Activated CD8-positive, alpha-beta T cell treated with anti-CD3 and anti-CD28 coated beads for 36 hours (primary cell): ENCODE measurements at regions of chr6 and their contacts with region 1.

Region 1: GRCh38 chr6:53171605-53172446 is 23.2 kb upstream of the GCM1 start:
- DNase-seq: peak; percentile 92
- ATAC-seq: peak; percentile 100
- H3K4me3 Mint-ChIP-seq: no peak overlapping the region
- H3K27ac Mint-ChIP-seq: no peak overlapping the region
- H3K4me1 Mint-ChIP-seq: no peaks in the 10 kb centered on the region
- H3K27me3 Mint-ChIP-seq: no peaks in the 10 kb centered on the region
- CTCF ChIP-seq: peak; percentile 100

Region 2: GRCh38 chr6:53244958-53245357 is 73.1 kb after region 1 on chr6:
- CTCF ChIA-PET with region 1: no interaction called
- POLR2A ChIA-PET with region 1: no interaction called
- intact Hi-C with region 1: no loop called
- DNase-seq: peak; percentile 52
- ATAC-seq: peak; percentile 82
- H3K4me3 Mint-ChIP-seq: no peak overlapping the region
- H3K27ac Mint-ChIP-seq: no peak overlapping the region
- H3K4me1 Mint-ChIP-seq: peaks cover 21% of the 10 kb centered on the region
- H3K27me3 Mint-ChIP-seq: no peaks in the 10 kb centered on the region
- CTCF ChIP-seq: no peak

Region 3: DNA sequence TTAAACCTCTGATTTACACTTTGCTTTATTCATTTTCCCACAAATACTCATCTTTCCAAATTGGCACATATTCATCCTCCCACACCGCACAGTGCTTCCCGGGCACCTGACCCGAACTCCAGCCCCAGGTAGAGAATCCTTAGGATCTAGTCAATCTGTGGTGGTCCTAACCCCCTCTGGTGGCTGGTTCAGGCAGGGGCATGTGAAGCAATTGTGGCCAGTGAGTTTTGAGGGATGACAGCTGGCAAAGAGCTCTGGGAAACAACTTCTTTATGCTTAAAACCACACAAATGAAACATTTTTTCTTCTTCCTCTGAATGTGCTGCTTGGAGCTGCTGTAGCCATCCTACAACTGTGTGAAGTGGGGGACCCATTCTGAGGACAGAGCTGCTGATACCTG is 122.3 kb after region 1 on chr6:
- CTCF ChIA-PET with region 1: interaction called, 13 read pairs
- POLR2A ChIA-PET with region 1: no interaction called
- intact Hi-C with region 1: loop called (anchors 5 kb)
- DNase-seq: peak; percentile 45
- ATAC-seq: peak; percentile 53
- H3K4me3 Mint-ChIP-seq: no peak overlapping the region
- H3K27ac Mint-ChIP-seq: no peak overlapping the region
- H3K4me1 Mint-ChIP-seq: peaks cover 66% of the 10 kb centered on the region
- H3K27me3 Mint-ChIP-seq: no peaks in the 10 kb centered on the region
- CTCF ChIP-seq: peak; percentile 44

Region 4: GRCh38 chr6:53410508-53411258 is 238.9 kb after region 1 on chr6:
- CTCF ChIA-PET with region 1: interaction called, 24 read pairs
- POLR2A ChIA-PET with region 1: no interaction called
- intact Hi-C with region 1: loop called (anchors 2 kb)
- DNase-seq: peak; percentile 70
- ATAC-seq: peak; percentile 96
- H3K4me3 Mint-ChIP-seq: no peak overlapping the region
- H3K27ac Mint-ChIP-seq: no peak overlapping the region
- H3K4me1 Mint-ChIP-seq: peaks cover 2% of the 10 kb centered on the region
- H3K27me3 Mint-ChIP-seq: no peaks in the 10 kb centered on the region
- CTCF ChIP-seq: peak; percentile 71

Region 5: DNA sequence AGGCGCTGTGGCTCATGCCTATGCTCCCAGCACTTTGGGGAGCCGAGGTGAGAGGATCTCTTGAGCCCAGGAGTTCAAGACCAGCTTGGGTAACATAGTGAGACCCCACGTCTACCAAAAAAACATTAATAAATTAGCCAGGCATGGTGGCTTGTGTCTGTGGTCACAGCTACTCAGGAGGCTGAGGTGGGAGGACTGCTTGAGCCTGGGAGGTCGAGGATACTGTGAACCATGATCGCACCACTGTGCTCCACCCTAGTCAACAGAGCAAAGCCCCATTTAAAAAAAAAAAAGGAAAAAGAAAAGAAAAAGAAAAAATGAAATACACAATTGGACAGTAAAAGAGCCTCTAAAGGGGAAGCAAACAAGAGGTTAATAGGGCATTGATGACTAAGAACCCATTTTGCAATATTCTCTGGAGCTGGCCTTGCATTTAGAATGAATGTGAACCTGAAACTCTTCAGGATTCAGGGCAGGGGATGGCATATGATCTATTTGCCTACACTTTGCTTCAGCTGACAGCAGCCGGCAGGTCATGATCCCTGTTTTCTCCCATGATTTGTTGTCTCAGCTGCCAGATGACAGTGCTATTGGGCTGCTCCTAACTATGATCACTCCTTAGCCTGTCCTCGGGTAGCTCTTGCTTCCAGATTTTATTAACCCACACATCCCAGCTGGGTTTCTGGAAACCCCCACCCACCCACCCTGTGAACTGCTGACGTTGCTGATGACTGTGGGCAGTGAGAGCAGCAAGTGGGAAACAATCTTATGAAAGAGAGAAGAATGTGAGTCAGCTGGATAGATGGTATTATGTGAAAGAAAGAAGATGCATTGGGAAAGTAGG is 260.7 kb after region 1 on chr6:
- CTCF ChIA-PET with region 1: interaction called, 20 read pairs
- POLR2A ChIA-PET with region 1: no interaction called
- intact Hi-C with region 1: loop called (anchors 5 kb)
- DNase-seq: no peak
- ATAC-seq: no peak
- H3K4me3 Mint-ChIP-seq: no peak overlapping the region
- H3K27ac Mint-ChIP-seq: no peak overlapping the region
- H3K4me1 Mint-ChIP-seq: peaks cover 39% of the 10 kb centered on the region
- H3K27me3 Mint-ChIP-seq: no peaks in the 10 kb centered on the region
- CTCF ChIP-seq: no peak

Region 6: GRCh38 chr6:53484476-53485280 is 312.9 kb after region 1 on chr6:
- CTCF ChIA-PET with region 1: interaction called, 99 read pairs
- POLR2A ChIA-PET with region 1: interaction called, 3 read pairs
- intact Hi-C with region 1: loop called (anchors 1 kb)
- DNase-seq: peak; percentile 89
- ATAC-seq: peak; percentile 64
- H3K4me3 Mint-ChIP-seq: no peak overlapping the region
- H3K27ac Mint-ChIP-seq: no peak overlapping the region
- H3K4me1 Mint-ChIP-seq: peaks cover 2% of the 10 kb centered on the region
- H3K27me3 Mint-ChIP-seq: peaks cover 29% of the 10 kb centered on the region
- CTCF ChIP-seq: peak; percentile 98